ENCODE measurements at regions of chr10 and their contacts with region 1.

Region 1: GRCh38 chr10:48506147-48506917 is 98.5 kb downstream of the ARHGAP22 start:
- DNase-seq: no peak
- H3K4me3 Mint-ChIP-seq: no peak overlapping the region
- H3K27ac Mint-ChIP-seq: no peak overlapping the region
- H3K4me1 Mint-ChIP-seq: no peaks in the 10 kb centered on the region
- H3K27me3 Mint-ChIP-seq: peaks cover 3% of the 10 kb centered on the region

Region 2: GRCh38 chr10:48215488-48216204 is 290.7 kb before region 1 on chr10:
- intact Hi-C with region 1: loop called (anchors 5 kb)
- DNase-seq: peak; percentile 9
- H3K4me3 Mint-ChIP-seq: no peak overlapping the region
- H3K27ac Mint-ChIP-seq: no peak overlapping the region
- H3K4me1 Mint-ChIP-seq: no peaks in the 10 kb centered on the region
- H3K27me3 Mint-ChIP-seq: peaks cover 4% of the 10 kb centered on the region

Region 3: DNA sequence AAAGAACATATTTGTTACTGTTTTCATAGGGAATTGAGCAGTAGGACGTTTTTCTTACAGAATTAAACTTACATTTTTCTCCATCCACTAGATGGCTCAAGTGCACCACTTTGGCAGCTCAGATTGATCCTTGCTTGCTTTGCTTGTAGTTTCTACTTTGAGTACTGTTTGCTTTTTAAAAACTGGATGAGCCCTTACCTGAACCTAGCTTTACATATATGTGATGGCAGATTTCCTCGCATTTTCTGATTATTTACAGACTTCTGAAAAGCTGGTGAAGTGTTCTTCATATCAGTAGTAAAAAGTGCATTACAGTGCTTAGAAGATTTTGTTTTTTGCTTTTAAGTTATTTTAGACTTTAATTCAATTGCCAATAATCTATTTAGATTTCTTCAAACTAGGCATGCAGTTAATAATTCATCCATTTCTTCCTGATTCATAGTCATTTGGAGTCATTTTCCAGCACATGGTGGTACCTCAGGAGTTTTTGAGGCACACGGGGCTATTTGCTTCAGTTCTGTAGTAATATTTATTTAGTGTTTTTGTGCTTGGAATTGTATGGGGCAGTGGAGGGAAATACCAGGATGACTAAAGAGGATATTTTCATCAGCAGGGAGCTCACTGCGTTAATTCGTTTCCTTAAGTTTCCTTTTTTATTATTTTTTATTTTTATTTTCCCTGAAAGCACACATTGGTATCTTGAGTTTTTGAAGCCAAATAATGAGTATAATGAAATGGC is 142.5 kb before region 1 on chr10:
- intact Hi-C with region 1: loop called (anchors 5 kb)
- DNase-seq: no peak
- H3K4me3 Mint-ChIP-seq: no peak overlapping the region
- H3K27ac Mint-ChIP-seq: no peak overlapping the region
- H3K4me1 Mint-ChIP-seq: peaks cover 5% of the 10 kb centered on the region
- H3K27me3 Mint-ChIP-seq: no peaks in the 10 kb centered on the region

Region 4: GRCh38 chr10:48533951-48534720 is 27.8 kb after region 1 on chr10:
- intact Hi-C with region 1: no loop called
- DNase-seq: no peak
- H3K4me3 Mint-ChIP-seq: no peak overlapping the region
- H3K27ac Mint-ChIP-seq: no peak overlapping the region
- H3K4me1 Mint-ChIP-seq: no peaks in the 10 kb centered on the region
- H3K27me3 Mint-ChIP-seq: peaks cover 10% of the 10 kb centered on the region